ENCODE measurements at regions of chr1 and their contacts with region 1.

Region 1: GRCh38 chr1:40078512-40079333 is 18.3 kb downstream of the PPT1 start:
- DNase-seq: peak; percentile 58 to 75
- H3K4me3 ChIP-seq: no peak overlapping the region
- H3K4me3 Mint-ChIP-seq: no peak overlapping the region
- H3K27ac Mint-ChIP-seq: no peak overlapping the region
- H3K4me1 ChIP-seq: no peaks in the 10 kb centered on the region
- H3K4me1 Mint-ChIP-seq: no peaks in the 10 kb centered on the region
- H3K27me3 ChIP-seq: no peaks in the 10 kb centered on the region
- H3K27me3 Mint-ChIP-seq: no peaks in the 10 kb centered on the region
- CTCF ChIP-seq: peak; percentile 62 to 70

Region 2: GRCh38 chr1:39981957-39982356 is 96.8 kb before region 1 on chr1:
- CTCF ChIA-PET with region 1: no interaction called
- POLR2A ChIA-PET with region 1: no interaction called
- intact Hi-C with region 1: no loop called
- DNase-seq: no peak
- H3K4me3 ChIP-seq: no peak overlapping the region
- H3K4me3 Mint-ChIP-seq: no peak overlapping the region
- H3K27ac Mint-ChIP-seq: peak overlapping the region; percentile 70
- H3K4me1 ChIP-seq: peaks cover 3% of the 10 kb centered on the region; the same call in 1 of the 2 replicates
- H3K4me1 Mint-ChIP-seq: peaks cover 9% of the 10 kb centered on the region
- H3K27me3 ChIP-seq: no peaks in the 10 kb centered on the region
- H3K27me3 Mint-ChIP-seq: no peaks in the 10 kb centered on the region
- CTCF ChIP-seq: no peak

Region 3: GRCh38 chr1:40107290-40108262 is 28.9 kb after region 1 on chr1:
- CTCF ChIA-PET with region 1: no interaction called
- POLR2A ChIA-PET with region 1: no interaction called
- intact Hi-C with region 1: no loop called
- DNase-seq: peak; percentile 60 to 75
- H3K4me3 ChIP-seq: no peak overlapping the region
- H3K4me3 Mint-ChIP-seq: peak overlapping the region; percentile 55
- H3K27ac Mint-ChIP-seq: peak overlapping the region; percentile 93
- H3K4me1 ChIP-seq: peaks cover 9% of the 10 kb centered on the region; the same call in 1 of the 2 replicates
- H3K4me1 Mint-ChIP-seq: peaks cover 10% of the 10 kb centered on the region
- H3K27me3 ChIP-seq: no peaks in the 10 kb centered on the region
- H3K27me3 Mint-ChIP-seq: no peaks in the 10 kb centered on the region
- CTCF ChIP-seq: no peak

Region 4: DNA sequence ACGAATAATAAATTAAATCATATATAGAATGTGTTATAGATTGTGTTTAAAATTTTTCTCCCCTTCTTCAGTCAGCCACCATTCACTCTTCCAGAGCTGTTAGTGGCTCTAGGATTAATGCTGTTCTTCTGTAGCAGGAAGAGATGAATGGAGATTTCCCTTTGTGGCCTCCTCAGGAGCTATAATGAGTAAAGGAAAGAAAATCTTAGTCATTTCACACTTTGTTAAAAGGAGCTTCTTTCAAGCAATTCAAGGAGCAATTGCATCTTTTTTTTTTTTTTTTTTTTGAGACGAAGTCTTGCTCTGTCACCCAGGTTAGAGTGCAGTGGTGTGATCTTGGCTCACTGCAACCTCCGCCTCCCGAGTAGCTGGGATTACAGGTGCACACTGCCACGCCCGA is 145.3 kb after region 1 on chr1:
- CTCF ChIA-PET with region 1: no interaction called
- POLR2A ChIA-PET with region 1: no interaction called
- intact Hi-C with region 1: no loop called
- DNase-seq: no peak
- H3K4me3 ChIP-seq: no peak overlapping the region
- H3K4me3 Mint-ChIP-seq: no peak overlapping the region
- H3K27ac Mint-ChIP-seq: no peak overlapping the region
- H3K4me1 ChIP-seq: no peaks in the 10 kb centered on the region
- H3K4me1 Mint-ChIP-seq: no peaks in the 10 kb centered on the region
- H3K27me3 ChIP-seq: no peaks in the 10 kb centered on the region
- H3K27me3 Mint-ChIP-seq: no peaks in the 10 kb centered on the region
- CTCF ChIP-seq: no peak

Region 5: GRCh38 chr1:40305457-40305856 is 226.7 kb after region 1 on chr1:
- CTCF ChIA-PET with region 1: interaction called, 4 read pairs
- POLR2A ChIA-PET with region 1: no interaction called
- intact Hi-C with region 1: loop called (anchors 10 kb)
- DNase-seq: no peak
- H3K4me3 ChIP-seq: no peak overlapping the region
- H3K4me3 Mint-ChIP-seq: no peak overlapping the region
- H3K27ac Mint-ChIP-seq: no peak overlapping the region
- H3K4me1 ChIP-seq: no peaks in the 10 kb centered on the region
- H3K4me1 Mint-ChIP-seq: peaks cover 6% of the 10 kb centered on the region
- H3K27me3 ChIP-seq: no peaks in the 10 kb centered on the region
- H3K27me3 Mint-ChIP-seq: no peaks in the 10 kb centered on the region
- CTCF ChIP-seq: peak in 1 of 2 experiments; percentile 24